Activated CD4-positive, alpha-beta memory T cell treated with anti-CD3 and anti-CD28 coated beads, Interleukin-2, amount 10 ng/mL, durations not matched to agents 7 days and 5 days (primary cell): ENCODE measurements at regions of chr12 and their contacts with region 1.

Region 1: GRCh38 chr12:121637231-121637914 is 11.0 kb downstream of the ORAI1 start:
- DNase-seq: peak; percentile 74
- H3K4me3 Mint-ChIP-seq: peak overlapping the region; percentile 59
- H3K27ac Mint-ChIP-seq: peak overlapping the region; percentile 93
- H3K4me1 Mint-ChIP-seq: peaks cover 51% of the 10 kb centered on the region
- H3K27me3 Mint-ChIP-seq: no peaks in the 10 kb centered on the region

Region 2: GRCh38 chr12:121345151-121345815 is 292.1 kb before region 1 on chr12:
- CTCF ChIA-PET with region 1: no interaction called
- POLR2A ChIA-PET with region 1: no interaction called
- DNase-seq: no peak
- H3K4me3 Mint-ChIP-seq: no peak overlapping the region
- H3K27ac Mint-ChIP-seq: peak overlapping the region; percentile 1
- H3K4me1 Mint-ChIP-seq: peaks cover 31% of the 10 kb centered on the region
- H3K27me3 Mint-ChIP-seq: no peaks in the 10 kb centered on the region

Region 3: GRCh38 chr12:121483949-121484348 is 153.4 kb before region 1 on chr12:
- CTCF ChIA-PET with region 1: no interaction called
- POLR2A ChIA-PET with region 1: no interaction called
- DNase-seq: no peak
- H3K4me3 Mint-ChIP-seq: no peak overlapping the region
- H3K27ac Mint-ChIP-seq: no peak overlapping the region
- H3K4me1 Mint-ChIP-seq: no peaks in the 10 kb centered on the region
- H3K27me3 Mint-ChIP-seq: no peaks in the 10 kb centered on the region

Region 4: DNA sequence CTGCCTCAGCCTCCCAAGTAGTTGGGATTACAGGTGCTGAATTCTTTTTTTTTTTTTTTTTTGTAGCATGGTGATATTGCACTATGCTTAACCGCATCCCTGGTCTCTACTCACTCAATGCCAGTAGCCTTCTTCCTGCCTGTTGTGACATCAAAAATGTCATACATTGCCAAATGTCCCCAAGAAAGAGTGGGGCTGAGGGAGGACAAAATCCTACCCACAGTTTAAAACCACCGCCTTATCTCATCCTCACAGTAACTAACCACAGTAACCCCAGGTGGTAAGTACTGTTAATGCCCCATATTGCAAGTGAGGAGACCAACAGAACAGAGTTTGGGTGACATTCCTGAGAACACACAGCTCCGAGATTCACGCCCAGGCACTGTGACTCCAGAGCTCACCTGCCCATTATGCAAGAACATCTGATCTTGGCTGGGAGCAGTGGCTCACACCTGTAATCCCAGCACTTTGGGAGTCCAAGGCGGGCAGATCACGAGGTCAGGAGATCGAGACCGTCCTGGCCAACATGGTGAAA is 12.5 kb after region 1 on chr12:
- CTCF ChIA-PET with region 1: interaction called, 8 read pairs
- POLR2A ChIA-PET with region 1: interaction called, 26 read pairs
- DNase-seq: peak; percentile 58
- H3K4me3 Mint-ChIP-seq: no peak overlapping the region
- H3K27ac Mint-ChIP-seq: peak overlapping the region; percentile 80
- H3K4me1 Mint-ChIP-seq: peaks cover 43% of the 10 kb centered on the region
- H3K27me3 Mint-ChIP-seq: no peaks in the 10 kb centered on the region

Region 5: DNA sequence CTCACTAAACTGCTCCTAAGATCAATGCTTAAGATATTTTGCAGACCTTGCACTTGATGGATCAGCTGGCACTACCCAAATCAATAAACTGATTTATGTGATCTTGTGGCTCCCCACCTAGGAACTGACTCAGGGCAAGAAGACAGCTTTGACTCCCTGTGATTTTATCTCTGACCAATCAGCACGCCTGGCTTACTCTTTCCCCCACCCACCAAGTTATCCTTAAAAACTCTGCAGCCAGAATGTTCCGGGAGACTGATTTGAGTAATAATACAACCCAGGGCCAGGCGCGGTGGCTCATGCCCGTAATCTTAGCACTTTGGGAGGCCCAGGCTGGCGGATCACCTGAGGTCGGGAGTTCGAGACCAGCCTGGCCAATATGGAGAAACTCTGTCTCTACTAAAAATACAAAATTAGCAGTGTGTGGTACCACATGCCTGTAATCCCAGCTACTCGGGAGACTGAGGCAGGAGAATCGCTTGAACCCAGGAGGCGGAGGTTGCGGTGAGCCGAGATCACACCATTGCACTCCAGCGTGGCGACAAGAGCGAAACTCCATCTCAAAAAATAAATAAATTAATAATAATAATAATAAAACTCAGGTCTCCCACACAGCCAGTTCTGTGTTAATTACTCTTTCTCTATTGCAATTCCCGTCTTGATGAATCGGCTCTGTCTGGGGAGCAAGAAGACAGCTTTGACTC is 20.1 kb after region 1 on chr12:
- CTCF ChIA-PET with region 1: interaction called, 3 read pairs
- POLR2A ChIA-PET with region 1: interaction called, 38 read pairs
- DNase-seq: peak; percentile 55
- H3K4me3 Mint-ChIP-seq: peak overlapping the region; percentile 5
- H3K27ac Mint-ChIP-seq: peak overlapping the region; percentile 98
- H3K4me1 Mint-ChIP-seq: peaks cover 76% of the 10 kb centered on the region
- H3K27me3 Mint-ChIP-seq: no peaks in the 10 kb centered on the region